Common myeloid progenitor, CD34-positive (primary cell): ENCODE measurements at regions of chr9 and their contacts with region 1.

Region 1: GRCh38 chr9:137034863-137035761 is 3.2 kb upstream of the FUT7 start:
- DNase-seq: peak; percentile 91 to 96 (median 95)
- H3K4me3 ChIP-seq: peak overlapping the region in 5 of 7 experiments; percentile 29 to 59 (median 51)
- H3K27ac ChIP-seq: peak overlapping the region in 1 of 2 experiments; percentile 58
- H3K4me1 ChIP-seq: peaks cover 0 to 56% (median 55%) of the 10 kb centered on the region in 4 experiments
- H3K27me3 ChIP-seq: no peaks in the 10 kb centered on the region

Region 2: GRCh38 chr9:136807281-136808074 is 227.6 kb before region 1 on chr9 and contains the start of gene RABL6:
- CTCF ChIA-PET with region 1: interaction called, 10 read pairs
- POLR2A ChIA-PET with region 1: no interaction called
- DNase-seq: peak; percentile 72 to 87 (median 85)
- H3K4me3 ChIP-seq: peak within 1 kb of the TSS; percentile 83 to 93 (median 91)
- H3K27ac ChIP-seq: peak within 1 kb of the TSS in 1 of 2 experiments; percentile 74
- H3K4me1 ChIP-seq: peaks cover 5 to 36% (median 22%) of the 10 kb centered on the region in 4 experiments
- H3K27me3 ChIP-seq: peaks cover 0 to 1% (median 0%) of the 10 kb centered on the region in 5 experiments

Region 3: DNA sequence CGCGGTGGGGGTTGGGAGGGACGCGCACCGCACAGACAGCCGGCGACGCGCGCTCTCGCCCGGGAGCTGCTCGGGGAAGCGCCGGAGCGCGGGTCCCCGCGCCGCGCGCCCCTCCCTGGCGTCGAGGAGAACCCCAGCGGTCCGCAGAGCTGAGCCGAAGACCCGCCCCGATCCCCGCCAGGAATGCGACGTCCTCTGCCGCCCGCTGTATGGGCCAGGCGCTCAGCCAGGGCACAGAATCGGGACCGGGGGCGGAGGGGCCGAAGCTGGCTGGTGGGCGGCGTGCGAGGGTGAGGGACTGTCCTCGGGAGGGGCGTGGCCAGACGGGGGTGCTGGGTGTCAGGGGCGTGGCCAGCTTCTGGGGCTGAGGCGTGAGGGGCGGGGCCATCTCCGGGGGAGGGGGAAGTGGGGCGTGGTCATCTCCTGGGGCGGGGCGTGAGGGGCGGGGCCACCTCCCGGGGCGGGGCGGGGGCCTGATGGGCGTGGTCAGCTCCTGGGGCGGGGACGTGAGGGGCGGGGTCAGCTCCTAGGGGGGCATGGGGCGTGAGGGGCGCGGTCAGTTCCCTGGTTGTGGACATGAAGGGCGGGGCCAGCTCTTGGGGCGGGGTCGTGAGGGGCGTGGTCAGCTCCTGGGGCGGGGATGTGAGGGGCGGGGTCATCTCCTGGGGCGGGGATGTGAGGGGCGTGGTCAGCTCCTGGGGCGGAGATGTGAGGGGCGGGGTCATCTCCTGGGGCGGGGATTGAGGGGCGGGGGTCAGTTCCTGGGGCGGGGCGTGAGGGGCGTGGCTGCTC is 56.8 kb before region 1 on chr9:
- CTCF ChIA-PET with region 1: interaction called, 28 read pairs
- POLR2A ChIA-PET with region 1: interaction called, 4 read pairs
- DNase-seq: peak; percentile 43 to 59 (median 55)
- H3K4me3 ChIP-seq: peak overlapping the region in 4 of 7 experiments; percentile 19 to 64 (median 46)
- H3K27ac ChIP-seq: no peak overlapping the region
- H3K4me1 ChIP-seq: peaks cover 0 to 41% (median 36%) of the 10 kb centered on the region in 4 experiments
- H3K27me3 ChIP-seq: peaks cover 0 to 17% (median 4%) of the 10 kb centered on the region in 5 experiments

Region 4: GRCh38 chr9:137046098-137046787 is 11.1 kb after region 1 on chr9 and contains the start of gene NPDC1:
- CTCF ChIA-PET with region 1: interaction called, 25 read pairs
- POLR2A ChIA-PET with region 1: interaction called, 4 read pairs
- DNase-seq: peak; percentile 72 to 86 (median 86)
- H3K4me3 ChIP-seq: peak within 1 kb of the TSS; percentile 51 to 85 (median 73)
- H3K27ac ChIP-seq: no peak within 1 kb of the TSS
- H3K4me1 ChIP-seq: peaks cover 0 to 50% (median 45%) of the 10 kb centered on the region in 4 experiments
- H3K27me3 ChIP-seq: peaks cover 0 to 39% (median 12%) of the 10 kb centered on the region in 5 experiments

Region 5: DNA sequence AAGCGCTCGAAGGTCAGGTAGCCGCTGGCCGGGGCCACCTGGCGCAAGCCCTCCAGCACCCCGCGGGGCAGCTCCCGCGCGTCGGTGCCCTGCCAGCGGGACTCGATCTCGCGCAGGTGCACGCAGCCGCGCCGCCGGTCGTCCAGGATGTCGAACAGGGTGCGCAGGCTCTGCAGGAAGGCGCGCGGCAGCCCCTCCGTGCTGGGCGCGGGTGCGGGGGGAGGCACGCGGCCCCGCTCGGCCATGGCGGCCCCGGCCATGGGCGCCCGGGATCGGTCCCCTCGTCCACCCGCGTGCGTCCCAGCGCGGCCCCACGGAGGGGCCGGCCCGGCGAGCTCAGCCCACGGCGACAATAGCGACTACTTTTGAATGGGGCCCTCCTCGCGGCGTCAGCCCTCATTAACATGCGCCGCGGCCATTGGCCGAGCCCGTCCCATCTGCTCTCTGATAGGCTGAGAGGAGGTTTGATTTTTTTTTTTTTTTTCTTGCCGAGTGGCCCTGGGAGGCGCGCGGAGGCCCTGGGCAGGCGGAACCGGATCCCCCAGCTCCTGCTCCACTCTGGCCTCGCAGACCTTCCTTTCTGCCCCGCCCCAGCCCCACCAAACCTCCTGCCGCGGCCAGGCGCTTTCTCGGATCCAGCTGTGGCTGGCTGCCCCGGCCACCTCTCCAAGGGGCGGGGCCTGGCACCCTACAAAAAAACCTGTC is 35.2 kb after region 1 on chr9 and contains the start of gene SAPCD2:
- CTCF ChIA-PET with region 1: interaction called, 20 read pairs
- POLR2A ChIA-PET with region 1: no interaction called
- DNase-seq: peak; percentile 89 to 94 (median 93)
- H3K4me3 ChIP-seq: peak within 1 kb of the TSS; percentile 15 to 76 (median 69)
- H3K27ac ChIP-seq: peak within 1 kb of the TSS in 1 of 2 experiments; percentile 74
- H3K4me1 ChIP-seq: peaks cover 0 to 46% (median 30%) of the 10 kb centered on the region in 4 experiments
- H3K27me3 ChIP-seq: no peaks in the 10 kb centered on the region

Region 6: DNA sequence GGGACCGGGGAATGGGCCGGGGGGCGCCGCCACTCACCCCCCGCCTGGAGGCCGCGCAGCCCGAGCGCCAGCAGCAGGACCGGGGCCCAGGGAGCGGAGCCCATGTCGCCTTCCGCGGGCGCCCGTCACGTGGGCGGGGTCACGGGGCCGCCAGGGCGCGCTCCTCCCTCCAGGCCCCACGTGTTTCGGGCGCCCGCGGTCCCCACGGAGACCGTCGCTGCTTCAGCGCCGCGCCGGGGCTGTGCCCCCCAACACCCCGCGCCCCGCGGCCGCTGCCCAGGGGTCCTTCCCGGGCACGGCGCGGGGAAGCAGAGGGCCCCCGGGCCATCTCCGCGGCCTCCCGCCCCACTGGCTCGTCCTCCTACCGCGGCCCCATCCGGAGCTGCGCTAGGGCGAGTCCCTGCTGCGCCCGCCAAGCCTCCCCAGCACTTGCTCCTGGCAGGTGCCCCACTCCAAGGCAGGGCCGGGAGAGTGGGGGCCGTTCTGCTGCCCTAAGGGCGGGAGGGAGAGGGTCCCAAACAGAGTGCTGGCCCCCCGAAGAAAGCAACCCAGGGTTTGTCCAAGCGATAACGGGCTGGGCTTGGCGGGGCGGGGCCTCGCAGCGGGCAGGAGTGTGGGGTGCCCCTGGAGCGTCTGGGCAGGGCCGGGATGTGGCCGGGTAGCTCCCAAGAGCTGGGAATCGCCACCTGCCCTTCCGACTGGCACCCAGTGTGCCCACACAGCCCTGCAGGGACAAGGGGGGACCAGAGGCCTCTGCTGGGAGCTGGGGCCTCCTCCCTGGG is 79.7 kb after region 1 on chr9 and contains the start of gene DPP7:
- CTCF ChIA-PET with region 1: no interaction called
- POLR2A ChIA-PET with region 1: no interaction called
- DNase-seq: peak; percentile 52 to 76 (median 66)
- H3K4me3 ChIP-seq: peak within 1 kb of the TSS; percentile 17 to 67 (median 55)
- H3K27ac ChIP-seq: peak within 1 kb of the TSS in 1 of 2 experiments; percentile 43
- H3K4me1 ChIP-seq: peaks cover 0 to 13% (median 11%) of the 10 kb centered on the region in 4 experiments
- H3K27me3 ChIP-seq: no peaks in the 10 kb centered on the region